Spleen (tissue), 13 donors: ENCODE measurements at regions of chr14 and their contacts with region 1.

Region 1: GRCh38 chr14:24680516-24680915 is 46.5 kb upstream of the GZMB start:
- DNase-seq: no peak
- H3K4me3 ChIP-seq: no peak overlapping the region
- H3K27ac ChIP-seq: peak overlapping the region in 4 of 8 donors; percentile 12 to 78 (median 62)
- H3K4me1 ChIP-seq: peaks cover 0 to 41% (median 14%) of the 10 kb centered on the region in 6 donors
- H3K27me3 ChIP-seq: no peaks in the 10 kb centered on the region
- CTCF ChIP-seq: no peak
- POLR2A ChIP-seq: no peak

Region 2: DNA sequence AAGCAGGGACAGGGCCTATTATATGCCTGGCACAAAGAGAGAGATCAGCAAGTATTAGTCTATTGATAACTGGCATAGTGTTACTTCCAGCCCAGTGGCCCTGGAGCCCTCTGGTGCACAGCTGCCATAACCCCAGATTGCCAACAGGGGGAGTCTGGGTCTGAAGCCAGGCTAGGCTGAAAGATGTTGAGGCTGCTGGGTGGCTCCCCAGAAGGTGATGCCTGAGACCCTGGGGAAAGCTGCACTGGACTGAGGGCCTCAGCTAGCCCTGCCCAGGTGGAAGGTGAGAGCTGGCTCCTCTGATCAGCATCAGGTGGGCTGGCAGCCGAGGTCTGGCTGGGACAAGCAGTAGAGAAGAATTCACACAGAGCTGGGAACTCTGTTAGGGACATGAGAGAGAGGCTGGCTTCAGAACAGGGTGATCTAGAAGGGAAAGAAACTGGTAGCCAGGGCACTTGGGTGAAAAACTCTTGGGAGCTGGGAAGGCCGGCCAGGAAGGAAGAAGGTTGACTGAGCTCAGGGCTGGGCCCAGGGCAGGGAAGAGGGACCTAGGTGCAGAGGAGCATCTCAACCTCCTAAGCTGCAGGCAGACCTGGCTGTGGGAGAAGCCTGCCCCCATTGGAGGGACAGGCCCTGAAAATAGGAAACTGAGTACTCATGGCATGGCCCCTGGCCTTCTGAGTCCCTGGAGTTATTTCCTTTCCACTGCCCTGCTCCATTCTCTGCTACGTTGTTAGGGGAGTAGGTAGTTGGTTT is 74.9 kb before region 1 on chr14:
- intact Hi-C with region 1: loop called (anchors 5 kb)
- DNase-seq: peak; percentile 87
- H3K4me3 ChIP-seq: no peak overlapping the region
- H3K27ac ChIP-seq: peak overlapping the region in 3 of 8 donors; percentile 61 to 77 (median 63)
- H3K4me1 ChIP-seq: peaks cover 0 to 41% (median 31%) of the 10 kb centered on the region in 6 donors
- H3K27me3 ChIP-seq: no peaks in the 10 kb centered on the region
- CTCF ChIP-seq: peak; percentile 50 to 88 (median 76)
- POLR2A ChIP-seq: no peak